Activated naive CD4-positive, alpha-beta T cell treated with anti-CD3 and anti-CD28 coated beads for 36 hours (primary cell): ENCODE measurements at regions of chr12 and their contacts with region 1.

Region 1: DNA sequence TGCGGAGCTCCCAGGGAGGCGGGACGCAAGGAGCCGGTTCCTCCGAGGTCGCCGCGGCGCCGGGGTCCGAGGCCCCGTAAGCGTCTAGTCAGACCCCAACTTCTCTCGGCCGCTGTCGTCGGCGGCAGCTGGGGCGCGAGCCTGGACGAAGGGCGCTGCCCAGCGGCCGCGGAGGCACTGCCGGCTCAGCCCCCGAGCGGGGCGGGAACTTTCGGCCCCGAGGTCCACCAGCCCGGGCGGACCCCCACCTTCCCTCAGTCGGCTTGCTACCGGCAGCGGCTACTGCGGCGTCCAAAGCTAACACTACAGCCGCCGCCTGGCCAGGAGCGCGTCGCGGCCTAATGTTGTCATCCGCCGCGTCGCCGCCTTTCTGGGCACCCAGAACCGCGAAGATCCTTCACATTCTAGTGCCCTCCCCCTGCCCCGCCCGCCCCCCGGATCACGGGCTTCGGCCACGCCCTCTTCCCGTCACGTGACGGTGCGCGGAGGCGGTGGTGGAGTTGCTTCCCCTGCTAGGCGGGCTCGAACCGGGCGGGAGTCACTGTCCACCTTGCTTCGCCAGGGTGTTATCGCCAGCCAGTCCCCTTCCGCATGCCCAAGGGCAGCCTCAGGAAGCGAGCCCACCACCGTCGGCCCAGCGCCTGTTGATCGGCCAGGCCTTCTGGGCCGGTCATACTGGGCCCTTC is at the start of gene OSBPL8:
- DNase-seq: peak; percentile 96
- H3K4me3 Mint-ChIP-seq: peak within 1 kb of the TSS; percentile 92
- H3K27ac Mint-ChIP-seq: peak within 1 kb of the TSS; percentile 96
- H3K4me1 Mint-ChIP-seq: peaks cover 34% of the 10 kb centered on the region
- H3K27me3 Mint-ChIP-seq: no peaks in the 10 kb centered on the region
- total RNA-seq, gene OSBPL8: 56.8 to 63.7 TPM

Region 2: DNA sequence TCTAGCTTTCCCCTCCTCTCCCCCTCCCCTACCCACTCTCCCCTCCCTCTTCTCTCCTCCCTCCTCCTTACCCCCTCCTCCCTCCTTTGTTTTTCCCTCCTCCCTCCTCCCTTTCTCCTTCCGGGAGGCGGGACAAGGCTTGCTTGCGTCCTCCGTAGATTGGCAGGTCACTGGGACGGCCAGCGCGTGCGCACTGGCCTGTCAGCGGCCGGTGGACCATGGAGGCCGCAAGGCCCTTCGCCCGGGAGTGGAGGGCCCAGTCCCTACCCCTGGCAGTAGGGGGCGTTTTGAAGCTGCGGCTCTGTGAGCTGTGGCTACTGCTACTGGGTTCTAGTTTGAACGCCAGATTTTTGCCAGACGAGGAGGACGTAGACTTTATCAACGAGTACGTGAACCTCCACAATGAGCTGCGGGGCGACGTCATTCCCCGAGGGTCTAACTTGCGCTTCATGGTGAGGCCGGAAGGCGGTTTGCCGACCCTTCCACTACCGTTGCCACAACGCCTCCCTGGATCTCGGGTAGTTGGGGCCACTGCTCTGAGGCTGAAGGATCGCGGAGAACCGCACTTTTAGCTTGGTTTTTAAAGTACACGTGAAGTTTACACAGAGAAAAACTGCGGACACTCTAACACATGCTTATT is 1168.5 kb before region 1 on chr12 and contains the start of gene GLIPR1L2:
- CTCF ChIA-PET with region 1: no interaction called
- intact Hi-C with region 1: loop called (anchors 10 kb)
- DNase-seq: peak; percentile 93
- H3K4me3 Mint-ChIP-seq: peak within 1 kb of the TSS; percentile 87
- H3K27ac Mint-ChIP-seq: peak within 1 kb of the TSS; percentile 89
- H3K4me1 Mint-ChIP-seq: peaks cover 27% of the 10 kb centered on the region
- H3K27me3 Mint-ChIP-seq: no peaks in the 10 kb centered on the region
- total RNA-seq, gene GLIPR1L2: 0.33 to 0.35 TPM

Region 3: DNA sequence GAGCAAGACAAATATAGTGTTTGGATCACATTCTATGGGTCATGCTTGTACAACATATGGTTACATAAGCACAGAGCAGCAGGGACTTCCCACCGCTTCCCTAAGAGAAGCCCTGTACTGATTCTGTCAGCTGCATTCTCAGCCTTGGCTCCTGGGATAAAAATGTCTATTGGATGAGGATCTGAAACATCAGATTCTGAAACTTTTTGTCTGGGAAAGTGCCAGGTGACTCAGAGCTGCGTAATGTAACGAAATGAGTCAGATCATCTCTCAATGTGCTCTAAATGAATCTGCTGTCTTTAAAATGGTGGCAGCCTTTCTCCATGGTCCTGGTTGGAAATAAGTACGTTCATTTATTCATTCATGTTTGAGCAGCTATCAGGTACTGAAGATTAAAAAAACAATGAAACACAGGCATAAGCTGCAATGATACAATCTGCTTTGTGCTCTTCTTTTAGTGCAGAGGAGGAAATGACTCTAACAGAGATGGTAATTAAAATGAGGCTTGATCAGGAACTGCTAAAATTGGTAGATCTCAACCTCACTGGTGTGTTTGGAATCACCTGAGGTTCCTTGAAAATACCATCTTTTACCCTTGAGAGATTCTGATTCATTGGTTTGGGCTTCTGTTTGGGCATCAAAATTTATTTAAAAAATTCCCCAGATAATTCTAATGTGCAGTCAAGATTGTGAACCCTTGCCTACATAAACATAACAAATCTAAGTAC is 375.9 kb before region 1 on chr12:
- CTCF ChIA-PET with region 1: no interaction called
- intact Hi-C with region 1: loop called (anchors 1 kb)
- DNase-seq: peak; percentile 76
- H3K4me3 Mint-ChIP-seq: no peak overlapping the region
- H3K27ac Mint-ChIP-seq: no peak overlapping the region
- H3K4me1 Mint-ChIP-seq: peaks cover 12% of the 10 kb centered on the region
- H3K27me3 Mint-ChIP-seq: peaks cover 46% of the 10 kb centered on the region

Region 4: DNA sequence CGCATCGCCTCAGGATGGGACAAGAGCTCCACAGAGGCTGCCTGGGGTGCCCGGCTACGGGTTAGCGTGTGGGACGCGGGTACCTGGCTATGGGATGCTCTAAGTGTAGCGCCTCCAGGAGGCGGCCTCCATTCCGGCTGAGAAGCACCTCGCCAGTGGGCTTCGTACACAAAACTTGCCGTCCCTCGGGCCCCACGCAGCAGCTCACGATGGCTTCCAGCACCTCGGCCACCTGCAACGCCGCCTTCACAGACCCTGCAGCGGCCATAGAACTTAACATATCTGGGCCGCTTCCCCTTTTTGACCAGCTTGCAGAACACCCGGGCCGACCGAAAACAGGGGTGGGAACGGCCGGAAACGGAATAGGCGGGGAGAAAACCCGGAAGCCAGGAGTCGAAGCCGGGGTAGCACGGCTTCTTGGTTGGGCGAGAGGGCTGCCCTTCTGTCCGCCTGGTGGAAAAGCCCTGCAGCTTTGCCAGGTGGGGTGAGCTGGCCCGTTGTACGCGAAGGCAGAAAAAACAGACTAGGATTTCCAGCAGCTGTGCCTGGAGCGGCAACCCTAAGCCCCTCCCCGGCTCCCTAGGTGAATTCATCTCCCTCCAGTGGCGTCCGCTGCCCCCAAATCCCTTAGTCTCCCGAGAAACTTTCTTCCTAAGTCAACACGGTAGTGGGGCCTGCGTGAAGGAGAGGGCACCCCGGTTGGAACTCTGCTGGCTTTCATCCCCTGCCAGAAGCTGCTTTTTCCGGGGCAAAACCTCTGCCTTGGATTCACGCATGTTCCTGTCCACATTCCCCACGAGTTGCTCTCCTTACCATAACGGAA is 211.3 kb before region 1 on chr12 and contains the start of gene BBS10:
- CTCF ChIA-PET with region 1: no interaction called
- intact Hi-C with region 1: loop called (anchors 1 kb)
- DNase-seq: peak; percentile 92
- H3K4me3 Mint-ChIP-seq: peak within 1 kb of the TSS; percentile 90
- H3K27ac Mint-ChIP-seq: peak within 1 kb of the TSS; percentile 86
- H3K4me1 Mint-ChIP-seq: peaks cover 22% of the 10 kb centered on the region
- H3K27me3 Mint-ChIP-seq: no peaks in the 10 kb centered on the region
- total RNA-seq, gene BBS10: 3.3 TPM

Region 5: GRCh38 chr12:76544601-76545261 is 14.8 kb before region 1 on chr12:
- CTCF ChIA-PET with region 1: interaction called, 7 read pairs
- intact Hi-C with region 1: loop called (anchors 1 kb)
- DNase-seq: no peak
- H3K4me3 Mint-ChIP-seq: no peak overlapping the region
- H3K27ac Mint-ChIP-seq: no peak overlapping the region
- H3K4me1 Mint-ChIP-seq: peaks cover 62% of the 10 kb centered on the region
- H3K27me3 Mint-ChIP-seq: no peaks in the 10 kb centered on the region

Region 6: GRCh38 chr12:76777765-76778216 is 218.2 kb after region 1 on chr12:
- CTCF ChIA-PET with region 1: no interaction called
- intact Hi-C with region 1: loop called (anchors 5 kb)
- DNase-seq: peak; percentile 23
- H3K4me3 Mint-ChIP-seq: no peak overlapping the region
- H3K27ac Mint-ChIP-seq: peak overlapping the region; percentile 60
- H3K4me1 Mint-ChIP-seq: peaks cover 68% of the 10 kb centered on the region
- H3K27me3 Mint-ChIP-seq: no peaks in the 10 kb centered on the region